IMR-90 (cell line): ENCODE measurements at regions of chr9 and their contacts with region 1.

Region 1: DNA sequence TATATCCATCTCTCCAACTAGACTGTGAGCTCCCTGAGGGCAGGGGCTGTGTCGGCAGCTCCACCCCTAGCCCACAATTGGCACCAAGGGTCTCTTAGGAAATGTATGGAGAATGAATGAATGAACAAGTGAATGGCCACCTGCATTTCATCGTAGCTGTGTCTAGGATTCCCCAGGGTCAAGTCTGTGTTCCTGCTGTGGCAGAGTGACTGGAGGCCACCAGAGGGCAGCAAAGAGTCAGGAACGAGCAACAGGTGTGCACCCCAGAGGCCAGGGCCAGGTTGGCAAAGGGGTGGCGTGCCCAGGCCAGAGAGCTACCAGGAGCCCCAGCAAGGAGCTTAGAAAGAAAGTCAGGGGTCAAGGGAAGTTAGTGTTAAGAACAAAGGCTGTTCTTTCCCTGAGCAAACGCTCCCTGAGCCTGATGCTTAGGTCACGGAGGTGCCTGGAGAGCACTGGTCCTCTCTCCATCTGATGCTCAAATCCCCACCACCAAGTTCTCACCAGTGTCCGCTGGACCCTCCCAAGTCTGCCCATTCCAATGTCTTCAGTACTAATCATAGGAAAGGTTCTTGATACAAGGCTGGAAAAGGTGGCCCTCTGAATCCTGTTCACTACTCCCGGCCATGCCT is 160.7 kb downstream of the PAX5 start:
- DNase-seq: peak; percentile 49
- ATAC-seq: peak; percentile 90
- H3K4me3 ChIP-seq: no peak overlapping the region
- H3K27ac ChIP-seq: no peak overlapping the region
- H3K4me1 ChIP-seq: no peaks in the 10 kb centered on the region
- H3K27me3 ChIP-seq: peaks cover 37% of the 10 kb centered on the region
- CTCF ChIP-seq: peak; percentile 75
- POLR2A ChIP-seq: no peak
- RAD21 ChIP-seq: peak; percentile 83

Region 2: GRCh38 chr9:36980148-36980974 is 107.0 kb after region 1 on chr9:
- CTCF ChIA-PET with region 1: no interaction called
- POLR2A ChIA-PET with region 1: no interaction called
- dilution Hi-C with region 1: no loop called
- in situ Hi-C with region 1: no loop called
- intact Hi-C with region 1: loop called (anchors 10 kb)
- DNase-seq: no peak
- ATAC-seq: no peak
- H3K4me3 ChIP-seq: no peak overlapping the region
- H3K27ac ChIP-seq: no peak overlapping the region
- H3K4me1 ChIP-seq: no peaks in the 10 kb centered on the region
- H3K27me3 ChIP-seq: peaks cover 44% of the 10 kb centered on the region
- CTCF ChIP-seq: no peak
- POLR2A ChIP-seq: no peak
- RAD21 ChIP-seq: no peak

Region 3: GRCh38 chr9:37119907-37120842 is 246.8 kb after region 1 on chr9 and contains the start of gene ZCCHC7:
- CTCF ChIA-PET with region 1: no interaction called
- POLR2A ChIA-PET with region 1: no interaction called
- dilution Hi-C with region 1: no loop called
- in situ Hi-C with region 1: no loop called
- intact Hi-C with region 1: loop called (anchors 5 kb)
- DNase-seq: peak; percentile 93
- ATAC-seq: peak; percentile 98
- H3K4me3 ChIP-seq: peak within 1 kb of the TSS; percentile 79
- H3K27ac ChIP-seq: peak within 1 kb of the TSS; percentile 91
- H3K4me1 ChIP-seq: no peaks in the 10 kb centered on the region; the same call in 1 of the 2 replicates
- H3K27me3 ChIP-seq: no peaks in the 10 kb centered on the region
- CTCF ChIP-seq: no peak
- POLR2A ChIP-seq: peak; percentile 86
- RAD21 ChIP-seq: no peak
- total RNA-seq, gene ZCCHC7: 21.4 and 28.7 TPM in 2 replicates

Region 4: GRCh38 chr9:37262410-37262809 is 389.0 kb after region 1 on chr9:
- CTCF ChIA-PET with region 1: no interaction called
- POLR2A ChIA-PET with region 1: no interaction called
- dilution Hi-C with region 1: no loop called
- in situ Hi-C with region 1: loop called (anchors 25 kb)
- intact Hi-C with region 1: no loop called
- DNase-seq: peak; percentile 49
- ATAC-seq: 0 out of 2 replicates have a peak, but pooled peaks have one; percentile 44
- H3K4me3 ChIP-seq: no peak overlapping the region
- H3K27ac ChIP-seq: no peak overlapping the region
- H3K4me1 ChIP-seq: no peaks in the 10 kb centered on the region
- H3K27me3 ChIP-seq: no peaks in the 10 kb centered on the region
- CTCF ChIP-seq: peak; percentile 57
- POLR2A ChIP-seq: no peak
- RAD21 ChIP-seq: peak; percentile 75

Region 5: GRCh38 chr9:37329576-37329975 is 456.2 kb after region 1 on chr9:
- CTCF ChIA-PET with region 1: interaction called, 4 read pairs
- POLR2A ChIA-PET with region 1: no interaction called
- dilution Hi-C with region 1: no loop called
- in situ Hi-C with region 1: no loop called
- intact Hi-C with region 1: loop called (anchors 5 kb)
- DNase-seq: peak; percentile 50
- ATAC-seq: peak; percentile 40; the same call in 1 of the 2 replicates
- H3K4me3 ChIP-seq: no peak overlapping the region
- H3K27ac ChIP-seq: no peak overlapping the region
- H3K4me1 ChIP-seq: no peaks in the 10 kb centered on the region
- H3K27me3 ChIP-seq: no peaks in the 10 kb centered on the region
- CTCF ChIP-seq: peak; percentile 46
- POLR2A ChIP-seq: no peak
- RAD21 ChIP-seq: peak; percentile 62

Region 6: GRCh38 chr9:37415011-37415719 is 541.8 kb after region 1 on chr9:
- CTCF ChIA-PET with region 1: no interaction called
- POLR2A ChIA-PET with region 1: no interaction called
- dilution Hi-C with region 1: no loop called
- in situ Hi-C with region 1: no loop called
- intact Hi-C with region 1: loop called (anchors 5 kb)
- DNase-seq: peak; percentile 73
- ATAC-seq: peak; percentile 85
- H3K4me3 ChIP-seq: no peak overlapping the region
- H3K27ac ChIP-seq: peak overlapping the region; percentile 2; the same call in 1 of the 2 replicates
- H3K4me1 ChIP-seq: peaks cover 2% of the 10 kb centered on the region; the same call in 1 of the 2 replicates
- H3K27me3 ChIP-seq: no peaks in the 10 kb centered on the region
- CTCF ChIP-seq: peak; percentile 76
- POLR2A ChIP-seq: no peak
- RAD21 ChIP-seq: peak; percentile 57